PC-3 (cell line): ENCODE measurements at regions of chr6 and their contacts with region 1.

Region 1: DNA sequence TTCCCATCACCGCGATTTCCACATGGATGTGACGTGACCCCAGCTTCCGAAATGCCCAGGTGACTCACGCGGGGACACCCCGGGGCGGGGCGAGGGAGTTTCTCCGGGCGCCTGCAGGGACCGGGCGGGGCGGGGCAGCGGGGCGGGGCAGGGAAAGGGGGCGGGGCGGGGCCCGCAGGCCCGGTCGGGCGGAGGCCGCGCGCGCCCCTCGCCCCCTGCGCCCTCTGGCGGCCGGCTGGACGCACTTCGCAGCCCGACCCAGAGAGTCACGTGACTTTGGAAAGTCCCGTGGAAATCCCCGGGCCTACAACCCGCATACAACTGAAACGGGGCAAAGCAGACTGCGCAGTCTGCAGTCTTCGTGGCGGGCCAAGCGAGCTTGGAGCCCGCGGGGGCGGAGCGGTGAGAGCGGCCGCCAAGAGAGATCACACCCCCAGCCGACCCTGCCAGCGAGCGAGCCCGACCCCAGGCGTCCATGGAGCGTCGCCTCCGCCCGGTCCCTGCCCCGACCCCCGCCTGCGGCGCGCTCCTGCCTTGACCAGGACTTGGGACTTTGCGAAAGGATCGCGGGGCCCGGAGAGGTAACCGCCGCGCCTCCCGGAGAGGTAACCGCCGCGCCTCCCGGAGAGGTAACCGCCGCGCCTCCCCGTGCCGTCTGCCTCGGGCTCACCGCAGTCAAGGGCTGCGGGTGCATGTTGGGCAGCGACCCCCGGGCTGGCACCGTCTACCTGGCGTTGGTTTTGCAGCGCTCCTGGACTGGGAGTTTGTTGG is at the start of gene TNFAIP3:
- DNase-seq: peak; percentile 90
- ATAC-seq: peak; percentile 82
- H3K4me3 ChIP-seq: peak within 1 kb of the TSS; percentile 90
- H3K27ac ChIP-seq: peak within 1 kb of the TSS; percentile 68
- H3K4me1 ChIP-seq: peaks cover 31% of the 10 kb centered on the region
- H3K27me3 ChIP-seq: no peaks in the 10 kb centered on the region
- CTCF ChIP-seq: peak; percentile 47
- total RNA-seq, gene TNFAIP3: 21.9 TPM in 2 replicates

Region 2: GRCh38 chr6:137465378-137466009 is 401.6 kb before region 1 on chr6:
- CTCF ChIA-PET with region 1: no interaction called
- POLR2A ChIA-PET with region 1: no interaction called
- intact Hi-C with region 1: no loop called
- DNase-seq: no peak
- ATAC-seq: no peak
- H3K4me3 ChIP-seq: no peak overlapping the region
- H3K27ac ChIP-seq: no peak overlapping the region
- H3K4me1 ChIP-seq: no peaks in the 10 kb centered on the region
- H3K27me3 ChIP-seq: peaks cover 7% of the 10 kb centered on the region; the same call in 1 of the 2 replicates
- CTCF ChIP-seq: no peak

Region 3: GRCh38 chr6:137754366-137754765 is 112.7 kb before region 1 on chr6:
- CTCF ChIA-PET with region 1: no interaction called
- POLR2A ChIA-PET with region 1: no interaction called
- intact Hi-C with region 1: no loop called
- DNase-seq: no peak
- ATAC-seq: no peak
- H3K4me3 ChIP-seq: no peak overlapping the region
- H3K27ac ChIP-seq: no peak overlapping the region
- H3K4me1 ChIP-seq: no peaks in the 10 kb centered on the region
- H3K27me3 ChIP-seq: no peaks in the 10 kb centered on the region
- CTCF ChIP-seq: no peak

Region 4: DNA sequence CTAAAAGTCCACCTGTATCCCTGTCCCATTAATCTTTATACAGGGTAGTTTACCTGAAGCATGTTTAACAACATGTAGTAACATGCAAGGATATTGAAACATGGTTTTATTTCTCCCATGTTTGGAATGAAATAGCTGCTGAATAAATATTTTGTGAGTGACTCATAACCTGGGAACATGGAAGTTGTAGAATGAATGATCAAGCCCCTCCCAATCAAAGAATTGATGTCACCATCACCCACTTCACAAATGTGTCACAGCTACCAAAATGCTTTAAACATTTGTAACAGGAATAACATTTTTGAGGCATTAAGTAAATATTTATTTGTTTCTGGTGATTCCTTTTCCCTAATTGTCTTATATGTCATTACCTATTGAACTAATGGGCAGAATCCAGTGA is 58.9 kb before region 1 on chr6:
- CTCF ChIA-PET with region 1: no interaction called
- POLR2A ChIA-PET with region 1: no interaction called
- intact Hi-C with region 1: loop called (anchors 2 kb)
- DNase-seq: peak; percentile 91
- ATAC-seq: peak; percentile 66
- H3K4me3 ChIP-seq: no peak overlapping the region
- H3K27ac ChIP-seq: peak overlapping the region; percentile 73
- H3K4me1 ChIP-seq: peaks cover 34% of the 10 kb centered on the region
- H3K27me3 ChIP-seq: no peaks in the 10 kb centered on the region
- CTCF ChIP-seq: no peak

Region 5: DNA sequence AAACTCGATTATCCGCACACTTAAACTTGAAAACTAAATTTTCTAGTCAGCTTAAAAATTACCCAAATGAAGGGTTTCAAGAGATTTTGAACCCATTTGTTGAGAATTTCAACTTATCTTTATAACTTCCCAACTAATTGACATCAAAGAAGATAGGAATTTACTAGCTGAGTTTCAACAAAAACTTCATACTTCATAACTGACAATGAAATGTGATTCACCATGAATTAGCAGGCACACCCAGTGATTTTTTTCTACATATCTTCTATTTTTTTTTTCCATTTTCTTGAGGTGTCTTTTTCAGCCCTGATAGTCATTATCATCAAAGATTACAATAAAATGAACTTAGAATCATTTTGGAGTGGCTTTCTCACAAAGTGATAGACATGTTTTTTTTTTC is 26.6 kb after region 1 on chr6:
- CTCF ChIA-PET with region 1: no interaction called
- POLR2A ChIA-PET with region 1: interaction called, 14 read pairs
- intact Hi-C with region 1: no loop called
- DNase-seq: peak; percentile 48
- ATAC-seq: no peak
- H3K4me3 ChIP-seq: no peak overlapping the region
- H3K27ac ChIP-seq: no peak overlapping the region
- H3K4me1 ChIP-seq: peaks cover 17% of the 10 kb centered on the region
- H3K27me3 ChIP-seq: no peaks in the 10 kb centered on the region
- CTCF ChIP-seq: no peak

Region 6: GRCh38 chr6:137910424-137910834 is 43.3 kb after region 1 on chr6:
- CTCF ChIA-PET with region 1: no interaction called
- POLR2A ChIA-PET with region 1: no interaction called
- intact Hi-C with region 1: no loop called
- DNase-seq: no peak
- ATAC-seq: no peak
- H3K4me3 ChIP-seq: no peak overlapping the region
- H3K27ac ChIP-seq: no peak overlapping the region
- H3K4me1 ChIP-seq: no peaks in the 10 kb centered on the region
- H3K27me3 ChIP-seq: no peaks in the 10 kb centered on the region
- CTCF ChIP-seq: no peak

Region 7: DNA sequence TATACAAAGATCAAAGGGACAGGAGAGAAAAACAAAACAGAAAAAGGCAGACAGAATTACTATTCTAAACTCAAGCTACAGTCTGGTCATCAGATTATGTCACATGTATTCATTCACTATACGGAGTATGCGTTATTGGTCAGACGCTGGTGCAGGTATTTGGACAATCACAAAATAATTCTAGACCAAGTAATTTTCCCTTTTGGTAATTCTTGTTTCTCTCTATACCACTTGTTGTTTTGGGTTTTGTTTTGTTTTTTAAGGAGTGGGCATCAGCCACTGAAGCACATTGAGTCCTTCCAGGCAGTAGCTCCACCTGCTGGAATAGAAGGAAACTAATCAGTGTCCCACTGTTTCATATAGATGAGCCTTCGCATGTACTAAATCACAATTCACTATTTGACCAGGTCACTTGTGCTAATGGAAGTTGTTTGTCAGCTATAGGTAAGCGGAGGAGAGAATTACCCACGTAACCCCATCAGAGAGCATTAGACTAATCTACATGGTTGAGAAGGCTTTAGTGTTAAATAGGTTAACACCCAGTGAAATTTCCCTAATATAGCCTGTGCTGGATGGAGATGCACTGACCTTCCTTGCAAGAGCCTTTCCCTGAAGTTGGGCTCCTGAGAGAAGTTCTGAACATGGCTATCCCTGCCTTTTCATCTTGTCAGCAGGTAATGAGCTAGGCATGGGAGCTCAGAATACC is 77.8 kb after region 1 on chr6:
- CTCF ChIA-PET with region 1: no interaction called
- POLR2A ChIA-PET with region 1: no interaction called
- intact Hi-C with region 1: loop called (anchors 2 kb)
- DNase-seq: peak; percentile 48
- ATAC-seq: peak; percentile 70
- H3K4me3 ChIP-seq: no peak overlapping the region
- H3K27ac ChIP-seq: no peak overlapping the region
- H3K4me1 ChIP-seq: peaks cover 6% of the 10 kb centered on the region; the same call in 1 of the 2 replicates
- H3K27me3 ChIP-seq: no peaks in the 10 kb centered on the region
- CTCF ChIP-seq: peak; percentile 73

Region 8: DNA sequence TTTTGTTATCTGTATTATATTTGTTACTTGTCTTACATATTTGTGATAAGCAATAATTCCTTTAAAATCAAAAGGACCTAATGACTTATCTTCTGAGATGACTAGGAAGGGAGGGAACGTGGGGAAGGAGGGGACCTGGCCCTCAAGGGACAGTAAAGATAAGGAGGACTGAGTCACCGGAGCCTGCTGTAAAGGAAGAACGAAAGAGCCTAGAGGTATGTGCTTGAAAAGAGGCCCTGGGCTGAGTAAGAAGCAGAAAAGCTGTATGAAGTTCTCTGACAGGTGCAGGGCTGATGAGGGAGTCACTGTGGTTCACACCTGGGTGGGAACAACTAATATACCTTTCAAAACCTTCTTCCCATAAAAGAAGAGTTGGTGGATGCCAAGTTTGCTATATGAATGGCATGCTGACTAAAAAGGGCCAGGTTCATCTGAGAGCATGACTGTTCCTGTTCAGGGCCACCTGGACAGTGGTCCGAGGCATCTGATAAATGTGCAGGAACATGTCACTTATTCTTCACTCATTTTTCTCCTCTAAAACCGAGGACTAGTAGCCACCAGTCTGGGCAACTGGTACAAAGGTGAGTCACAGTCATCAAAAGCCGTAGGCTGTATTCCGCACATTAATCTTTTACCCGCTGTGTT is 111.3 kb after region 1 on chr6:
- CTCF ChIA-PET with region 1: no interaction called
- POLR2A ChIA-PET with region 1: no interaction called
- intact Hi-C with region 1: no loop called
- DNase-seq: peak; percentile 77
- ATAC-seq: peak; percentile 87
- H3K4me3 ChIP-seq: no peak overlapping the region
- H3K27ac ChIP-seq: peak overlapping the region; percentile 58
- H3K4me1 ChIP-seq: peaks cover 13% of the 10 kb centered on the region
- H3K27me3 ChIP-seq: no peaks in the 10 kb centered on the region
- CTCF ChIP-seq: no peak